Activated naive CD4-positive, alpha-beta T cell treated with anti-CD3 and anti-CD28 coated beads for 36 hours (primary cell): ENCODE measurements at regions of chr1 and their contacts with region 1.

Region 1: GRCh38 chr1:151839457-151840405 is at the start of gene C2CD4D:
- DNase-seq: peak; percentile 83
- H3K4me3 Mint-ChIP-seq: peak within 1 kb of the TSS; percentile 88
- H3K27ac Mint-ChIP-seq: peak within 1 kb of the TSS; percentile 83
- H3K4me1 Mint-ChIP-seq: peaks cover 34% of the 10 kb centered on the region
- H3K27me3 Mint-ChIP-seq: no peaks in the 10 kb centered on the region
- total RNA-seq, gene C2CD4D: 2.3 to 2.7 TPM

Region 2: GRCh38 chr1:151106894-151107293 is 732.8 kb before region 1 on chr1:
- CTCF ChIA-PET with region 1: no interaction called
- intact Hi-C with region 1: no loop called
- DNase-seq: no peak
- H3K4me3 Mint-ChIP-seq: no peak overlapping the region
- H3K27ac Mint-ChIP-seq: no peak overlapping the region
- H3K4me1 Mint-ChIP-seq: no peaks in the 10 kb centered on the region
- H3K27me3 Mint-ChIP-seq: no peaks in the 10 kb centered on the region

Region 3: GRCh38 chr1:151198255-151199127 is 641.2 kb before region 1 on chr1 and contains the start of gene PIP5K1A:
- CTCF ChIA-PET with region 1: no interaction called
- intact Hi-C with region 1: loop called (anchors 10 kb)
- DNase-seq: peak; percentile 99
- H3K4me3 Mint-ChIP-seq: peak within 1 kb of the TSS; percentile 99
- H3K27ac Mint-ChIP-seq: peak within 1 kb of the TSS; percentile 99
- H3K4me1 Mint-ChIP-seq: peaks cover 39% of the 10 kb centered on the region
- H3K27me3 Mint-ChIP-seq: no peaks in the 10 kb centered on the region
- total RNA-seq, gene PIP5K1A: 72.6 to 82.5 TPM

Region 4: GRCh38 chr1:151534665-151535278 is 305.0 kb before region 1 on chr1:
- CTCF ChIA-PET with region 1: interaction called, 5 read pairs
- intact Hi-C with region 1: loop called (anchors 1 kb)
- DNase-seq: peak; percentile 91
- H3K4me3 Mint-ChIP-seq: no peak overlapping the region
- H3K27ac Mint-ChIP-seq: no peak overlapping the region
- H3K4me1 Mint-ChIP-seq: peaks cover 1% of the 10 kb centered on the region
- H3K27me3 Mint-ChIP-seq: no peaks in the 10 kb centered on the region

Region 5: DNA sequence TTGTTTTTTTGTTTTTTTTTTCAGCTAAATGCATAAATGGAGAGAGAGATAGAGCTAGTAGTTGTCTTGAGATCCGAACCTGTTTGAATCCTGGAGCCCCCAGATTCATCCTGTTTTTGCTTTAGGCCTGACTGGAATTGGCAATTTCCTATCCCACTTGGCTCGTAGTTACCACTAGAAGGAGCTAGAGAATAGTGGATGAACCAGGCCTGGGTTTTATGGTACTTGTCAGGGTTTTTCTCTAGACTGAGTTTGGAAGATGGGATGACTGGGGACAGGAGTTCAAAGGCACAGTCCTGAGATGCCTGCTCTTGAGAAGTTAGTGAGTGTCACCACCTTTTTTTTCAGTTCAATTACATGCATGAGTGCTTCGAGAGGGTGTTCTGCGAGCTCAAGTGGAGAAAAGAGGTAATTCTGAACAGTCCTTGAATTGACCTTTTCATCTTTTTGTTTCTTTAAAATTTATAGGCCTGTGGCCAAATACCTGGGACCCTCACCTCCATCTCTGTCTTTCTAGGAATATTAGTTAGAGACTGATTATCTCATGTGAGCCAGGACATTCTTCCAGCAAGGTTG is 146.6 kb before region 1 on chr1:
- CTCF ChIA-PET with region 1: interaction called, 3 read pairs
- intact Hi-C with region 1: loop called (anchors 1 kb)
- DNase-seq: no peak
- H3K4me3 Mint-ChIP-seq: no peak overlapping the region
- H3K27ac Mint-ChIP-seq: no peak overlapping the region
- H3K4me1 Mint-ChIP-seq: no peaks in the 10 kb centered on the region
- H3K27me3 Mint-ChIP-seq: no peaks in the 10 kb centered on the region

Region 6: GRCh38 chr1:151762941-151763921 is 76.5 kb before region 1 on chr1 and contains the start of gene MRPL9:
- CTCF ChIA-PET with region 1: interaction called, 12 read pairs
- intact Hi-C with region 1: loop called (anchors 1 kb)
- DNase-seq: peak; percentile 91
- H3K4me3 Mint-ChIP-seq: peak within 1 kb of the TSS; percentile 86
- H3K27ac Mint-ChIP-seq: peak within 1 kb of the TSS; percentile 90
- H3K4me1 Mint-ChIP-seq: peaks cover 17% of the 10 kb centered on the region
- H3K27me3 Mint-ChIP-seq: no peaks in the 10 kb centered on the region
- total RNA-seq, gene MRPL9: 157 to 160 TPM

Region 7: GRCh38 chr1:151909150-151910149 is 69.7 kb after region 1 on chr1 and contains the start of gene THEM4:
- CTCF ChIA-PET with region 1: no interaction called
- intact Hi-C with region 1: loop called (anchors 2 kb)
- DNase-seq: peak; percentile 97
- H3K4me3 Mint-ChIP-seq: peak within 1 kb of the TSS; percentile 75
- H3K27ac Mint-ChIP-seq: peak within 1 kb of the TSS; percentile 81
- H3K4me1 Mint-ChIP-seq: peaks cover 36% of the 10 kb centered on the region
- H3K27me3 Mint-ChIP-seq: no peaks in the 10 kb centered on the region
- total RNA-seq, gene THEM4: 20.1 to 22.0 TPM

Region 8: GRCh38 chr1:151980287-151981177 is 140.8 kb after region 1 on chr1:
- CTCF ChIA-PET with region 1: no interaction called
- intact Hi-C with region 1: no loop called
- DNase-seq: no peak
- H3K4me3 Mint-ChIP-seq: no peak overlapping the region
- H3K27ac Mint-ChIP-seq: no peak overlapping the region
- H3K4me1 Mint-ChIP-seq: peaks cover 26% of the 10 kb centered on the region
- H3K27me3 Mint-ChIP-seq: no peaks in the 10 kb centered on the region

Region 9: GRCh38 chr1:152148981-152149380 is 309.2 kb after region 1 on chr1:
- CTCF ChIA-PET with region 1: no interaction called
- intact Hi-C with region 1: no loop called
- DNase-seq: no peak
- H3K4me3 Mint-ChIP-seq: no peak overlapping the region
- H3K27ac Mint-ChIP-seq: no peak overlapping the region
- H3K4me1 Mint-ChIP-seq: no peaks in the 10 kb centered on the region
- H3K27me3 Mint-ChIP-seq: peaks cover 17% of the 10 kb centered on the region